H1 (cell line): ENCODE measurements at regions of chr6 and their contacts with region 1.

Region 1: GRCh38 chr6:84774157-84774984 is 10.0 kb upstream of the TBX18 start:
- DNase-seq: peak in 1 of 2 experiments; percentile 92
- H3K4me3 ChIP-seq: peak overlapping the region; percentile 32 to 75 (median 47)
- H3K27ac ChIP-seq: no peak overlapping the region
- H3K4me1 ChIP-seq: peaks cover 0 to 8% (median 2%) of the 10 kb centered on the region in 4 experiments; a peak in 2 of 7 replicates
- H3K27me3 ChIP-seq: peaks cover 47 to 79% (median 63%) of the 10 kb centered on the region in 4 experiments
- CTCF ChIP-seq: peak; percentile 85 to 94 (median 88)
- EP300 ChIP-seq: no peak
- POLR2A ChIP-seq: no peak
- RAD21 ChIP-seq: peak; percentile 47 to 66

Region 2: DNA sequence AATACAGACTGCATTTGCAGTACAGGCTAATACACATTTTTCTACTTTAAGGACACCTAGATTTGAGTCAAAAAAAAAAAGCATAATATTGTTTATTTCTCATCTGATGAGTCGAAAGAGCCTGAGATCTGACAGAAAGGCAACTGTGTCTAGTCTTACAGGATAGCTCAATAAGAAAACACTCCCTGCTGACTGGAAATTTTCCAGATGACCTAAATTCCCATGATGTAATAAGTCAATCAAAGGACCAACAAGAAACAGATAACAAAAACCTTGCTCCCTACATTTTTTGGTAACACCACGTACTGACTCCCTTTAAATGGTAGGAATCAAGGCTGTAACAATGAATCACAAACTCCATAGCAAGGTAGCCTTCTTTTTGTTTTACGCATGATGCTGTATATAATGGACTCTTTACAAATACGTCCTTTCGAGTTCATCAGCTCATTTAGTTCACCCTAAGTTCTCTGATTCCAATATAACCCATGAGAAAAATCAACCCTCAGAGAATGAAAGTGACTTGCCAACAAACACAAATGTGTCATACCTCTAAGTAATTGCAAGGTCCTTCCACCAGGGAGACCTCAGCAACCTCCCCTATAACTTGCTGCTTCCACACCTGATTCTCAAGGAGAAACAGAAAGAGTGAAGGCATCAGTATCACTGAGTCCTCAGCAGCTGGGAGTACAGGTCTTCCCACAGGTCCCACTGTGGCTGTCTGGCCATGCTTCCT is 22.1 kb before region 1 on chr6:
- CTCF ChIA-PET with region 1: interaction called, 12 read pairs
- POLR2A ChIA-PET with region 1: no interaction called
- DNase-seq: no peak
- H3K4me3 ChIP-seq: no peak overlapping the region
- H3K27ac ChIP-seq: no peak overlapping the region
- H3K4me1 ChIP-seq: no peaks in the 10 kb centered on the region
- H3K27me3 ChIP-seq: no peaks in the 10 kb centered on the region
- CTCF ChIP-seq: peak in 2 of 3 experiments; percentile 9 to 29; a peak in 1 of 4 replicates
- EP300 ChIP-seq: no peak
- POLR2A ChIP-seq: no peak
- RAD21 ChIP-seq: peak in 1 of 2 experiments; percentile 7; a peak in 1 of 4 replicates